Right ventricle myocardium superior (tissue), 1 donor: ENCODE measurements at regions of chr21 and their contacts with region 1.

Region 1: GRCh38 chr21:26067836-26068594 is 102.6 kb downstream of the APP start:
- DNase-seq: no peak
- ATAC-seq: peak; percentile 48

Region 2: GRCh38 chr21:26116456-26117011 is 48.5 kb after region 1 on chr21:
- intact Hi-C with region 1: loop called (anchors 10 kb)
- DNase-seq: no peak
- ATAC-seq: peak; percentile 70

Region 3: DNA sequence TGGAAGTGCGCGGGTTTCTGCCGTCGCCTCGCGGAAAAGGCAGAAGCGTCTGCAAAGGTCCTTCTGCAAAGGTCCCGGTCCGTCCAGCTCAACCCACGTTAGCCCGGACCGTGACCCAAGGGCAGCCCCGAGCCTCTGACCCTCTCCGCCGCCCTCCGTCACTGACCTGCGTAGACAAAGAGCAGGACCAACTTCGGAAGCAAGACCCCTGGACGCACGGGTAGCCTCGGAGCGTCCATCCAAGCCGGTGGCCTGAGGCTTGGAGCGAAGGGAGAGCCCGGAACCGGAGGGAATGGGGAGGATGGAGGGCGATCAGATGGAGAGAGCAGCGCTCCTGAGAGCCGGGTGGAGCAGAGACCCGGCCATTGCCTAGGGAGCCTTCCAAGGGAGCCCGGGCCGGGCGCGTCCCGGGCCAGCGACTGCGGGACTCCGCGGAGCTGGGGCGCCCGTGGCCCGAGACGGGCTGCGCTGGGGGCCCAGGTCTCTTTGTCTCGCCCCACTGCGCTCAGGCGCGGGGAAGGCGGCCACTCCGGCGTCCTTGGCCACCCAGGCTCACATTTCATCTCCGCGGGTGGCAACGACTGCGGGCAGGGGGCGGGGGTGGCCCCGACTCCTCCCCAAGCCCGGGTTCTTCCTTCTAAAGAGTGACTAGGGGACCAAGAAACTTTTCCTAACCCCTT is 504.8 kb after region 1 on chr21 and contains the start of gene CYYR1:
- intact Hi-C with region 1: no loop called
- DNase-seq: peak; percentile 49
- ATAC-seq: peak; percentile 43
- total RNA-seq, gene CYYR1: 24.7 TPM